Esophagus muscularis mucosa (tissue), 4 donors: ENCODE measurements at regions of chr1 and their contacts with region 1.

Region 1: DNA sequence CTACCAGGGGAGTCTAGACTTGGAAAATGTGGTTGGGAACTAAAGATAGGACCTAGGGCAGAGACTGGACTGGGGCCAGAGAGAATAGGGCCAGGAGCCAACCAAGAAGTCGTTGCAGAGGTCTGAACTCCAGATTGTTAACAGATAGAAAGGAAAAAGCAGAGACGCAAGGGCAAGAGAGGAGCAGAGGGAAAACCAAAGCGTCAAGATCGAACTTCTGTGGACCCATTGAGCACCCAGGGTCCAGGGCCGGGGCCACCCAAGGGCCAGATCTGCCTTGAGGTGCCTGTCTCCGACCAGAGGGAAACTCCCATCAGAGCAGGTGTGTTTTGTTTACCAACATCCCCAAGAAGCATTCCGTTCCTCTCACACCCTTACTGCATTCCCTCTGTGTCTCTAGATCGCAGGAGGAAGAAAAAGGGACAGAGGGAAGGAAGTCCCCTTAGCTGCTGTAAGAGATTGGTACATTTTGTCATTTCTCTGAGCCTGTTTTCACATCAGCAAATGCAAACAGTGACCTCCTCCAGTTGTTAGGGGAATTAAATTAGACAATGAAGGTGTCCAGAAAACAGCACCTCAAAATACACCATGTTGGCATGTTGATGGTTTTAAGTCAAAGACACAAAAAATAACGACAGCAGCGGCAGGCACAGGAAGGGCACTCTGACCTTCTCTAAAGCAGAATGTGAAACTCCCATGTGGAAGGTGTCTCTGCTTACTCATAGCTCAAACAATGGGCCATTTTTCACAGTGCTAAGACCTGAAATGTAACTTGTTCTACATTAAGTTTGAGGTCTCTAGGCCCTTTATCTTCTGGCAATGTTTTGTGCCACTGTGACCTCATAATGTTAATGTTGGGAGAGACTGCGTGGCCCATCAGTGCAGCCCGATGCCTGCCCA is 105.8 kb upstream of the RAB4A start:
- DNase-seq: no peak
- H3K4me3 ChIP-seq: no peak overlapping the region
- H3K27ac ChIP-seq: no peak overlapping the region
- H3K4me1 ChIP-seq: peaks cover 0 to 20% (median 7%) of the 10 kb centered on the region in 4 donors
- H3K27me3 ChIP-seq: no peaks in the 10 kb centered on the region
- CTCF ChIP-seq: no peak
- EP300 ChIP-seq: no peak
- POLR2A ChIP-seq: no peak

Region 2: DNA sequence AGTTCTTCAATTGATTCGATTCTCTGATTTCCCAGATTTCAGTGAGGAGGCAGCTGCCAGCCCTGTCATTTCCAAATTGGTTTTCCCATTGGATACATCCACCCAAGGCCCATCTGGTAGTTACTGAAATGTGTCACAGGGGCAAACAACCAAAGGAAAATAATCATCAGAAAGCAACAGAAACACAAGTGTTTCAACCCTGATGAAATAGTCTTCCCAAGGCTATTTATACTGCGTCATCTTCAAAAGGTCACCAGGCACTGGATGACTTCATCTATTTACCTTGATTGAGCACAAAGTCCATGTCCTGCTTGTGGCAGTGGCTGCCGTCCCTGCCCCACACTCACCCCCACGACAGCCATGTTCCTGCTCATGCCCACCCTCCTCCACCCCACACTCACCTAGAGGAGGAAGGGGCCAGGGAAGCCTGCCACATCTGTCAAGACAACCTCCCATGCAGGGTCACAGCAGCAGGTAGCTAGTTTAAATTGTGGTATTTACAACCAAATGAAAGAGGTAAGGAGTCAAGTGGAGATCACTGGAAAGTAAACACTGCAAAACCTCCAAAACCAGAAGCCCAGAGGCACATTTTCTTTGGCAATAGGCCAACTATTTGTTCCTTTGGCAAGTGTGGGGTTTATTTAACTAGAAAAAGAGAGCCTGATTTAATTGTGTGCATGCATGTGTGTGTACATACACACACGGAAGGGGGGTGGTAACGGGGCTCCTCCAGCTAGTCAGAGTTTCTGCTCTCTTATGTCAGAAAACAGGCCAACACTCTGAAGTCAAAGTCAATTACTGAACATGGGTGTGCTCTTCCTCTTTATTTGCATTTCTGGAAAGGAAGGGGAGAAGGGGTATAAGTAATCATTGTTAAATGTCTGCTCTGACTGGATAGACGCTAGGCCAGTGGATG is 56.3 kb after region 1 on chr1:
- intact Hi-C with region 1: loop called (anchors 5 kb)
- DNase-seq: no peak
- H3K4me3 ChIP-seq: no peak overlapping the region
- H3K27ac ChIP-seq: peak overlapping the region in 1 of 4 donors; percentile 43
- H3K4me1 ChIP-seq: peaks cover 0 to 20% (median 14%) of the 10 kb centered on the region in 4 donors
- H3K27me3 ChIP-seq: no peaks in the 10 kb centered on the region
- CTCF ChIP-seq: no peak
- EP300 ChIP-seq: no peak
- POLR2A ChIP-seq: no peak